Vagina (tissue), 2 donors: ENCODE measurements at regions of chr18 and their contacts with region 1.

Region 1: GRCh38 chr18:21444465-21445023 is 156.0 kb downstream of the ESCO1 start:
- DNase-seq: no peak
- H3K4me3 ChIP-seq: no peak overlapping the region
- H3K27ac ChIP-seq: no peak overlapping the region
- H3K4me1 ChIP-seq: no peaks in the 10 kb centered on the region
- H3K27me3 ChIP-seq: no peaks in the 10 kb centered on the region
- CTCF ChIP-seq: peak in 1 of 3 experiments; percentile 41
- POLR2A ChIP-seq: no peak

Region 2: GRCh38 chr18:21191596-21192307 is 252.8 kb before region 1 on chr18:
- intact Hi-C with region 1: loop called (anchors 10 kb)
- DNase-seq: no peak
- H3K4me3 ChIP-seq: no peak overlapping the region
- H3K27ac ChIP-seq: no peak overlapping the region
- H3K4me1 ChIP-seq: no peaks in the 10 kb centered on the region
- H3K27me3 ChIP-seq: no peaks in the 10 kb centered on the region
- CTCF ChIP-seq: no peak
- POLR2A ChIP-seq: no peak

Region 3: DNA sequence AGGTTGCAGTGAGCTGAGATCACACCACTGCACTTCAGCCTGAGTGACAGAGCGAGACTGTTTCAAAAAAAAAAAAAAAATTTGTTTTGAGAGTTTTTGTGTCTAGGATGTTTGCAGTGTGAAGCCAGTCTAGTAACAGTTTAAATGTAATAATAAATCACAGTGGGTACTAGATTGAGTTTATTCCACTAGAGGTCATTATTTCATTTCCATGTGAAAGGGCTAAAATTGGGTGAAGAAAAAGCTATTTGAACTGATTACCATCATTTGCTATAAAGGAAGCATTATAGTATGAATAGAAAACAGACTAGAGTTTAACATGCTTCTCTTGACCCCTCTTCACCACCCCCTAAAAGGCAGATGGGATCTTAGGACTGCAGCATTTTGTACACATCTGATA is 187.8 kb after region 1 on chr18:
- intact Hi-C with region 1: no loop called
- DNase-seq: no peak
- H3K4me3 ChIP-seq: no peak overlapping the region
- H3K27ac ChIP-seq: no peak overlapping the region
- H3K4me1 ChIP-seq: no peaks in the 10 kb centered on the region
- H3K27me3 ChIP-seq: no peaks in the 10 kb centered on the region
- CTCF ChIP-seq: no peak
- POLR2A ChIP-seq: no peak